ENCODE measurements at regions of chr19 and their contacts with region 1.

Region 1: DNA sequence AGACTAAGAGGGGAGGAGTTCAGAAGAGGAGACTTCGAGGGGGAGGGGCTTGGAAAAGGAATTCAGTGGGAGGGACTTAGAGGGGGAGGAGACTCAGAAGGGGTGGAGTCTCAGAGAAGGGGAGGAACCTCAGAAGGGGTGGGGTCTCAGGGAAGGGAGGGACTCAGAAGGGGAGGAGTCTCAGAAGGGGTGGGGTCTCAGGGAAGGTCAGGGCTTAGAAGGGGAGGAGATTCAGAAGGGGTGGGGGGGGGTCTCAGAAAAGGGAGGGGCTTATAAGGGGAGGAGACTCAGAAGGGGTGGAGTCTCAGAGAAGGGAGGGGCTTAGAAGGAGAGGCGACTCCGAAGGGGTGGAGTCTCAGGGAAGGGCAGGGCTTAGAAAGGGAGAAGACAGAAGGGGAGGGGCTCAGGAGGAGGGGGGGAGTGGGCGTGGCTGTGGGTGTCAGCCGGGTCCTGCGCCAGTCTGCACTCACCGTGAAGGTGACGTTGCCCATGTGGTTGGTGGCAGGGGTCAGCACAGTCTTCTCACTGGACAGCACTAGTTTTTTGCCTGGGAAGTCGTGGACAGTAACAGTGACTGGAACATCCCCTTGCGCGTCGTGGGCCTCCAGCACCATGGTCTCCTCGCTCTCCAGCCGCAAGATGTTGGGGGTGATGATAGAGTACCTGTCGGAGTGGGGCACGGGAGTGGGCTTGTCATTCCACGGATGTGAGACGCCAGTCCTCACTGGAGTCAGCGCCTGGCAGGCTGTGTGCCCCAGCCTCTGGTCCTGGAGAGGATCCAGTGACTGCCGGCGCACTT is 1.5 kb downstream of the C3 start:
- H3K4me3 Mint-ChIP-seq: no peak overlapping the region
- H3K27ac Mint-ChIP-seq: peak overlapping the region; percentile 3
- H3K4me1 Mint-ChIP-seq: peaks cover 47% of the 10 kb centered on the region
- H3K27me3 Mint-ChIP-seq: peaks cover 26% of the 10 kb centered on the region

Region 2: DNA sequence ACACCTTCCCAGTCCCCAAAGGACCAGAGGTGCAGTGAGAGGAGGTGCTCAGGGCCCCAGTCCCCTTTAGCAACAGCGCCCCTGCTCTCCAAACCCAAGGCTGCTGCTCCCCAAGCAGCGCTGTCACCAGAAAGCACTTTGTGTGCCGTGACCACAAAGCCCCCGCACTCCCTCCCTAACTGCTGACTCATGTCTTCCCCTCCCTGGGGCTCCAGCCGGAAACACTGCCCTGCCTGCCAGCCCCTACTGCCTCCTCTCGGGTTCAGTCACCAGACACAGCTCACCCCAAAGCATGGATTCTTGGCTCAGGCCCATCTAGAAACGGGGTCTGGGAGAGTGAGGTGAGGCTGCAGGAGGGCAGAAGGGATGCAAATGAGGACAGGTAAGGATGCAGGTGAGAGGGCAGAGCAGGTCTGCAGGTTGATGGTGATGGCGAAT is 44.1 kb before region 1 on chr19:
- intact Hi-C with region 1: loop called (anchors 10 kb)
- H3K4me3 Mint-ChIP-seq: peak overlapping the region; percentile 63
- H3K27ac Mint-ChIP-seq: peak overlapping the region; percentile 53
- H3K4me1 Mint-ChIP-seq: peaks cover 69% of the 10 kb centered on the region
- H3K27me3 Mint-ChIP-seq: peaks cover 2% of the 10 kb centered on the region

Region 3: DNA sequence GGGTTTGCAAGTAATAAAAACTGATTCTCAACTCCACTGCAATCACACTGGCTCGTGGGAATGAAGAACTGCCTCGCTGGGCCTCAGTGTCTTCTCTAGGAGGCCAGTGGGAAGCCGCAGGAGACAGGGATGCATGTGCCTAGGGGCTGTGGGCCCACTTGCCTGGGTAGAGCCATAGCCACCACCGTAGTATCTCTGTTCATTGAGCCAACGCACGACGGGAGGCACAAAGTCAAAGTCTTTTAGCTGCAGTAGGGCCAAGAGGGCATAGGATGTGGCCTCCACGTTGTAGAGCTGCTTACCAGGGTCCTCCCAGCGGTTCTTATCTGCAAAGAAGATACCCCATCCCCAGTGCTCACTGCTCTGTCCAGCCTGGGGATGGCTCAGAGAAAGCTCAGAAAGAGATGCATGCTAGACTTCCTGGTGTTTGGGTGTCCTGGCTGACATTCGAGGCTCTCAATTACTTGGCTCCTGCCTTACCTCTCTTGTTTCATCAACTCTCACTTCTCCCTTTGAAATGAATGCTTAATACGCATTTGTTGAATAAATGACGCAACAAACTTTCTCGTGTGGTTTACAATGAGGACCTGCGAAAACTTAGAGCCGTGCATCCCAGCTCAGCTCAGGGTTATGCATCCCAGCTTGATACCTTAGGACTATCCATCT is 32.8 kb before region 1 on chr19:
- intact Hi-C with region 1: no loop called
- H3K4me3 Mint-ChIP-seq: no peak overlapping the region
- H3K27ac Mint-ChIP-seq: no peak overlapping the region
- H3K4me1 Mint-ChIP-seq: peaks cover 29% of the 10 kb centered on the region
- H3K27me3 Mint-ChIP-seq: peaks cover 55% of the 10 kb centered on the region

Region 4: GRCh38 chr19:6891761-6892385 is 172.9 kb after region 1 on chr19:
- intact Hi-C with region 1: no loop called
- H3K4me3 Mint-ChIP-seq: no peak overlapping the region
- H3K27ac Mint-ChIP-seq: peak overlapping the region; percentile 52
- H3K4me1 Mint-ChIP-seq: peaks cover 41% of the 10 kb centered on the region
- H3K27me3 Mint-ChIP-seq: no peaks in the 10 kb centered on the region